AG04450 (cell line): ENCODE measurements at regions of chrX and their contacts with region 1.

Region 1: DNA sequence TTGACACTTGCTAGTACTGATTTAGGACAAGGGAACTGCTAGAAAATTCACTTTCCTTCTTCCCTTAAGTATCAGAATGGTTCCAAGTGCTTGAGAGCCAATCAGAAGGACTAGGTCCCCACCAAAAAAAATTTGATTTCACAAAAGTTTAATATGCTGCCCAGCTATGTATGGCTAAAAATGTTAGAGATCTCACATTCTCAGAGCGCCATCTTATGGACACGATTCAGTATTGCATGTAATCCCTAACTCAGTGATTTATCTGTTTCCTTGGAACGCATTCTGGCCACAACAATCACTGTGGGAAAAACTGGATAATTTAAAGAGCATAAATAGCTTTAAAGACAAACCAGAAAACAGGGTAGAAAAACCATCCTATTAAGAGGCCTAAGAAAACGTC is 255.1 kb upstream of the GPC4 start:
- DNase-seq: peak; percentile 2
- H3K4me3 ChIP-seq: no peak overlapping the region
- H3K27ac ChIP-seq: no peak overlapping the region
- H3K27me3 ChIP-seq: no peaks in the 10 kb centered on the region
- CTCF ChIP-seq: peak; percentile 58

Region 2: DNA sequence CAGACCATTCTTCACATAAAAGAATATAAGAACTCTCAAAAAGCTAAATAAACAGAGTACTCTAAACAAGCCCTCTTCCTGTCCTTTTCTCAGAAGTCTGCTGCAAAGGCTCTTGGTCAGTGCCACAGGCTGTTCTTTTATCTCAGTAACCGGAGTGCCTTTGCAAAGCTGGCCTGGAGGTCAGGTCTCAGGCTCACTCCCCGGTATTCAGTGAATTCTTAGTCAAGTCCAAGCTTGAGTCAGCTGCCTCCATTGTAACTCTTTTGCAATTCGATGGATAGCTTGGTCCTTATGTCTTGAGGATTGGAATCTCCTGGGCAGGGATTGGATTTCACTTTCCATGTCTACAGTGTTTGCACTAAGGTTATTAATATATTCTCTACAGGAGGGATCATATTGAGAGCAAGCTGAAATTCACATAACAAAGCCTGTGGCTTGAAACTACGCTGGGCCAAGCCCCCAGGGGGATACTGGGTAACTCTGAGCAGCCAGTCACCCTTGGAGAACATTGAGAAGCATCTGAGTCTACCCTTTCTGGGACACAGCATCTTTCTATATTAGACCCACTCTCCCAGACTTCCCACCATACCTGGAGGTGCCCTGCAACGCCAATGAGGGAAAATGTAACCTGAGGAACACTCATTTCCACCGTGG is 702.0 kb before region 1 on chrX:
- CTCF ChIA-PET with region 1: interaction called, 35 read pairs
- POLR2A ChIA-PET with region 1: no interaction called
- DNase-seq: no peak
- H3K4me3 ChIP-seq: no peak overlapping the region
- H3K27ac ChIP-seq: no peak overlapping the region
- H3K27me3 ChIP-seq: no peaks in the 10 kb centered on the region
- CTCF ChIP-seq: no peak

Region 3: DNA sequence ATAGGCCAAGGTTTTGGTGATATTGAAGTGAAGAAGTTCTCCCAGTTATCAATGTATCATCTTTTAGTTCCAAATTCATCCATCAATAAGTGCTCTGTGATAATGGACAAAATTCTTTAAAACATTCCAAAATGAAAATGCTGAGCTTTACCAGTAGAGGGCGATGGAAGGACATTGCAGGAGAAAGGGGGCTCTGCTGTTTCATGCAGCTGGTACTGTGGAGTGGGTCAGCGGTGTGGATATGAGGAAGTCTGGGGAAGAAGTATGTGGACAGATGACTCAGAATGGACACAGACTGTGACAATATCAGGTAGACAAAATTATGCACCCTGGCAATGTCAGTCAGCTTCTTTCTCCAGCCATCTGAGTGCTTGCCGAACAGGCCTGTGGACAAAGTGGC is 665.3 kb before region 1 on chrX:
- CTCF ChIA-PET with region 1: interaction called, 22 read pairs
- POLR2A ChIA-PET with region 1: no interaction called
- DNase-seq: no peak
- H3K4me3 ChIP-seq: no peak overlapping the region
- H3K27ac ChIP-seq: no peak overlapping the region
- H3K27me3 ChIP-seq: no peaks in the 10 kb centered on the region
- CTCF ChIP-seq: peak; percentile 61

Region 4: GRCh38 chrX:133335027-133335426 is 335.4 kb before region 1 on chrX:
- CTCF ChIA-PET with region 1: interaction called, 24 read pairs
- POLR2A ChIA-PET with region 1: no interaction called
- DNase-seq: no peak
- H3K4me3 ChIP-seq: no peak overlapping the region
- H3K27ac ChIP-seq: no peak overlapping the region
- H3K27me3 ChIP-seq: no peaks in the 10 kb centered on the region
- CTCF ChIP-seq: peak; percentile 55

Region 5: DNA sequence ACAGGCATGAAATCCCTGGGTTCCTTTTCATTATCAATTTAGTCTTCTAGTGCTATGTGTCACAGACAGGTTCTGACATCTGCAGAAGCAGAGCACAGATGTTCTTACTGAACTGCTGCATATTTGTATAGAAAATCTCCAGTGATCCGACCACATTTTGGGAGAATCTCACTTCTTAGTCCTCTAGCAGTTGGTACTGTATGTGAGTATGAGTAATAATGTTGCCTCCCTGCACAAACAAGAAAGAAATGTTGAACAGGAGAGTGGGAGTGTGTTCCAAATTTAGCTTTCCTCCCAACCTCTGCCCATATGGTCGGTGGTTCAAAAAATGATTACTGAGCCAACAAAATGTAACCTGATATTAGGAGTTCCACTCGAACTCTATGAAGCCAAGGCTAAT is 89.8 kb before region 1 on chrX:
- CTCF ChIA-PET with region 1: no interaction called
- POLR2A ChIA-PET with region 1: no interaction called
- DNase-seq: no peak
- H3K4me3 ChIP-seq: no peak overlapping the region
- H3K27ac ChIP-seq: no peak overlapping the region
- H3K27me3 ChIP-seq: no peaks in the 10 kb centered on the region
- CTCF ChIP-seq: no peak

Region 6: GRCh38 chrX:133783274-133783673 is 112.9 kb after region 1 on chrX:
- CTCF ChIA-PET with region 1: no interaction called
- POLR2A ChIA-PET with region 1: no interaction called
- DNase-seq: no peak
- H3K4me3 ChIP-seq: no peak overlapping the region
- H3K27ac ChIP-seq: no peak overlapping the region
- H3K27me3 ChIP-seq: no peaks in the 10 kb centered on the region
- CTCF ChIP-seq: no peak